ENCODE measurements at regions of chr3 and their contacts with region 1.

Region 1: GRCh38 chr3:141201122-141201521 is 30.5 kb upstream of the PXYLP1 start:
- ATAC-seq: no peak
- H3K4me3 ChIP-seq: no peak overlapping the region
- H3K27ac ChIP-seq: no peak overlapping the region
- H3K4me1 ChIP-seq: peaks cover 0 to 2% of the 10 kb centered on the region in 2 donors

Region 2: DNA sequence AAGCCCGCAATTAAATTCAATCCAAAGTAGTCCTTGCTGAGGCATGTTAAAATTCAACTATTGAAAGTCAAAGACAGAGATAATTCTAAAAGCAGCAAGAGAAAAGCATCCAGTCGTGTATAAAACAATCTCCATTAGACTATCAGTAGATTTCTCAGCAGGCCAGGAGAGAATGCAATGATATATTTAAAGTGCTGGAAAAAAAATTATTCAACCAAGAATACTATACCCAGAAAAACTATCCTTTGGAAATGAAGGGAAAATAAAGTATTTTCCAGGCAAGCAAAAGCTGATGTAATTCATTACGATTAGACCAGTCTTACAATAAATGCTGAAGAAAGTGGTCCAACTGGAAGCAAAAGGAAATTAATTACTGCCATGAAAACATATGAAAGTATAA is 409.8 kb before region 1 on chr3:
- in situ Hi-C with region 1: no loop called
- ATAC-seq: no peak
- H3K4me3 ChIP-seq: no peak overlapping the region
- H3K27ac ChIP-seq: no peak overlapping the region
- H3K4me1 ChIP-seq: no peaks in the 10 kb centered on the region

Region 3: DNA sequence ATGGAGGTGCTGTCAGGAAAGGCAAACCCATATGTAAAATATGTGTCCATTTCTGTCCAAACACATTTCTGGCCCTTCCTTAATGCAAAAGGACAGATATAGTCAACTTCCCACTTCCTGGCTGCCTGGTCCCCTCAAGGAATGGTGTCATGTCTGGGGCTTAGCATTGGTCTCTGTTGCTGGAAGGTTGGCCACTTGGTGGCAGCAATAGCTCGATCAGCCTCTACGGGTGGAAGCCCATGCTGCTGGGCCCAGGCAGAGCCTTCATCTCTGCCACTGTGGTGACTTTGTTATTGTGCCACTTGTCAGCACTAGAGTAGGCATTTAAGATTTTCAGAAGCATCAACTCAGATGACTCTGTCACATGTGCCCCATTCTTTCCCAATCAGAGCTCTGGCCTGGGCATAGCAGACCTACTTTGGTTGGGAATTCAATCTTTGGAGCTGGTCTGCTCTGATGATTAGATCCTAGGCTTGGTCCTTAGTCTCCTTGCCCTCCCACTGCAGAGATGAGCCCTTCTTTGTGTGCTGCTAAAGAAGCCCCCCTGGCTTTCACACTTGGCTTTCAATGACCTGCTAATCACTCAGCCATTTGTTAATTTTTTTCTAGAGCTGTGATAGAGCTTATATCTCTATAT is 201.0 kb before region 1 on chr3:
- in situ Hi-C with region 1: loop called (anchors 5 to 25 kb)
- ATAC-seq: peak; percentile 93 to 100 (median 98)
- H3K4me3 ChIP-seq: no peak overlapping the region
- H3K27ac ChIP-seq: no peak overlapping the region
- H3K4me1 ChIP-seq: no peaks in the 10 kb centered on the region

Region 4: GRCh38 chr3:141076797-141077571 is 124.1 kb before region 1 on chr3:
- in situ Hi-C with region 1: no loop called
- ATAC-seq: peak; percentile 74 to 86 (median 82)
- H3K4me3 ChIP-seq: peak overlapping the region; percentile 3 to 25 (median 11)
- H3K27ac ChIP-seq: peak overlapping the region; percentile 80 to 91
- H3K4me1 ChIP-seq: peaks cover 76 to 77% of the 10 kb centered on the region in 2 donors

Region 5: DNA sequence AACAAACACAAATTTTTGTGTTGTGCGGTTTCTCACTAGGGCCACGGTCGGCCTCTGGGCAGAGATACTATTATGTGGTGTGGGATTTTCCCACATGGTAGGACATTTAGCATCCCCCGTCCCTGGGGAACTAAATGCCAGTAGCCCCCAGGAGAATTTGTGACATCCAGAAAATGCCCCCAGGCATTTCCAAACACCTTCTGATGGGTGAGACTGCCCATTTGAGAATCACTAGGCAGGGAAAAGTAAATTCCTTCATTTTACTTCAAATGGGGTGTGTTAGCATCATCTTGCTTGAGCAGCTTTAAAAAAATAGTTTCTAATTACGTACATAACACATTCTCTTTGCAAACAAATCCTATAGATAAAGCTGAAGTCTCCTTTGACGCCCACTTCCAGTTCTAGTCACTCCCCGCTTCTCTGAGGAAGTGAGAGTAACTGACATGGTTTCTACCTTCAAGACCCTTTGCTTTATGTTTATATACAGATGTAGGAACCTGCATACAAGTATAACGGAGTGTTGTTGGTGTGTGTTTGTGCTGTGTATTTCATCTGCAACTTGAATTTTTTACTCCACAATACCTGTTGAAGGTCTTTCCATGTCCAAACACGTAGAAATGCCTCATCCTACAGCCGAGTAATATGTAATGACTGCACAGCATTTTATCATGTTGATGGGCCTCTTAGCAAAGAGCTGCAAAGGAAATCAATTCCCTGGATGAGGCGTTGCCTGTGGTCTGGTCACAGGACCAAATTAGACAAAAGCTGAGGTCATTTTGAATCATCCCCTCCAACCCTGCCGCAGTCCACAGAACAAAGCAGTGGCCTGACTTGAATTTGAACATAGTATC is 135.8 kb after region 1 on chr3:
- in situ Hi-C with region 1: no loop called
- ATAC-seq: peak in 7 of 8 experiments; percentile 95 to 99 (median 98)
- H3K4me3 ChIP-seq: no peak overlapping the region
- H3K27ac ChIP-seq: peak overlapping the region; percentile 80 to 86
- H3K4me1 ChIP-seq: peaks cover 38 to 40% of the 10 kb centered on the region in 2 donors

Measured in motor neuron (in vitro differentiated cells).